Heart right ventricle (tissue), 16 donors: ENCODE measurements at regions of chr21 and their contacts with region 1.

Region 1: DNA sequence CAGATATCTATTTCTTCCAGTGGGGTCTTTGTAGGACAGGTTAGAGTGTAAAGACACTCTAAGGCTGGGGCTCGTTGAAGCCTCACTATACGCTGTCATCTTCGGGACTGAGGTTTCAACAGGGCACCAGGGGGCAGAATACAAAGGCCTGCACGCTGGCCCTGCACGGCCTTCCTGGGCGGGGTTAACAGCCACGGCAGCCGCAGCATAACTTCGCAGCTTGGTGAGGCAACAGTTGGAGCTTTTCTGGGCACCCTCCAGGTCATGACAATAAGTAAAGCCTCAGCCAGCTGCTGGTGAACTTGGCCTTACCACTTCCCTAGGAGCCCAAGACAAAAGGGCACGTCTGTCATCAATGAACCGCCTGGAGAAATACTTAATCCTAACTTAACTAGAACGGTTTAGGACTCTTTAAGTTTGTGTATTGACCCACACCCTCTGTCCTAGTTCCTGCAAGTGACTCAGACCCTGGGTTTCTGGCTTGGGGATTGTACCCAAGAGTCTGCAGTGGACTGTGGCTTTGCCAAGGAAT is 2.3 kb upstream of the RUNX1 start:
- DNase-seq: peak; percentile 77 to 83
- ATAC-seq: peak; percentile 85 to 96 (median 90)
- H3K4me3 ChIP-seq: no peak overlapping the region
- H3K27ac ChIP-seq: peak overlapping the region in 5 of 10 donors; percentile 16 to 73 (median 49)
- H3K4me1 ChIP-seq: peaks cover 3 to 48% (median 10%) of the 10 kb centered on the region in 9 donors
- H3K27me3 ChIP-seq: peaks cover 0 to 21% (median 7%) of the 10 kb centered on the region in 7 donors
- CTCF ChIP-seq: peak; percentile 19 to 74 (median 68)

Region 2: GRCh38 chr21:35095859-35096291 is 44.5 kb after region 1 on chr21:
- intact Hi-C with region 1: no loop called
- DNase-seq: no peak
- ATAC-seq: no peak
- H3K4me3 ChIP-seq: no peak overlapping the region
- H3K27ac ChIP-seq: no peak overlapping the region
- H3K4me1 ChIP-seq: peaks cover 0 to 5% (median 0%) of the 10 kb centered on the region in 9 donors
- H3K27me3 ChIP-seq: peaks cover 0 to 6% (median 0%) of the 10 kb centered on the region in 7 donors
- CTCF ChIP-seq: no peak

Region 3: GRCh38 chr21:35400233-35400957 is 349.0 kb after region 1 on chr21:
- intact Hi-C with region 1: loop called in 9 of 10 experiments (anchors 1 to 10 kb)
- DNase-seq: peak in 1 of 2 donors; percentile 11
- ATAC-seq: peak in 7 of 8 donors; percentile 23 to 78 (median 67)
- H3K4me3 ChIP-seq: peak overlapping the region in 1 of 10 donors; percentile 18
- H3K27ac ChIP-seq: peak overlapping the region in 1 of 10 donors; percentile 64
- H3K4me1 ChIP-seq: peaks cover 0 to 26% (median 0%) of the 10 kb centered on the region in 9 donors
- H3K27me3 ChIP-seq: peaks cover 0 to 32% (median 19%) of the 10 kb centered on the region in 7 donors
- CTCF ChIP-seq: peak in 8 of 9 donors; percentile 17 to 64 (median 53)

Region 4: GRCh38 chr21:35840197-35840799 is 788.9 kb after region 1 on chr21:
- intact Hi-C with region 1: loop called in 2 of 10 experiments (anchors 10 kb)
- DNase-seq: peak in 1 of 2 donors; percentile 67
- ATAC-seq: peak in 7 of 8 donors; percentile 42 to 81 (median 63)
- H3K4me3 ChIP-seq: no peak overlapping the region
- H3K27ac ChIP-seq: no peak overlapping the region
- H3K4me1 ChIP-seq: peaks cover 0 to 12% (median 2%) of the 10 kb centered on the region in 9 donors
- H3K27me3 ChIP-seq: peaks cover 0 to 5% (median 0%) of the 10 kb centered on the region in 7 donors
- CTCF ChIP-seq: peak; percentile 65 to 91 (median 83)

Region 5: GRCh38 chr21:35940074-35940927 is 888.9 kb after region 1 on chr21:
- intact Hi-C with region 1: loop called in 4 of 10 experiments (anchors 5 to 10 kb)
- DNase-seq: peak in 1 of 2 donors; percentile 50
- ATAC-seq: peak; percentile 88 to 99 (median 94)
- H3K4me3 ChIP-seq: peak overlapping the region in 1 of 10 donors; percentile 11
- H3K27ac ChIP-seq: peak overlapping the region in 3 of 10 donors; percentile 3 to 26 (median 26)
- H3K4me1 ChIP-seq: peaks cover 0 to 10% (median 5%) of the 10 kb centered on the region in 9 donors
- H3K27me3 ChIP-seq: peaks cover 0 to 4% (median 0%) of the 10 kb centered on the region in 7 donors
- CTCF ChIP-seq: peak; percentile 23 to 77 (median 67)